Naive thymus-derived CD4-positive, alpha-beta T cell (primary cell): ENCODE measurements at regions of chr7 and their contacts with region 1.

Region 1: GRCh38 chr7:100726996-100727761 is 6.2 kb upstream of the ZAN start:
- DNase-seq: no peak
- ATAC-seq: no peak
- H3K4me3 ChIP-seq: no peak overlapping the region
- H3K4me3 Mint-ChIP-seq: no peak overlapping the region
- H3K27ac ChIP-seq: no peak overlapping the region
- H3K27ac Mint-ChIP-seq: peak overlapping the region in 1 of 9 donors; percentile 22
- H3K4me1 ChIP-seq: no peaks in the 10 kb centered on the region
- H3K4me1 Mint-ChIP-seq: peaks cover 0 to 5% (median 0%) of the 10 kb centered on the region in 7 donors
- H3K27me3 ChIP-seq: peaks cover 0 to 4% of the 10 kb centered on the region in 2 donors
- H3K27me3 Mint-ChIP-seq: peaks cover 16 to 31% (median 21%) of the 10 kb centered on the region in 5 donors

Region 2: GRCh38 chr7:100469227-100470044 is 257.7 kb before region 1 on chr7:
- CTCF ChIA-PET with region 1: interaction called, 3 read pairs
- POLR2A ChIA-PET with region 1: no interaction called
- intact Hi-C with region 1: loop called (anchors 1 kb)
- DNase-seq: peak; percentile 55 to 87 (median 75)
- ATAC-seq: peak; percentile 94
- H3K4me3 ChIP-seq: no peak overlapping the region
- H3K4me3 Mint-ChIP-seq: peak overlapping the region in 1 of 10 donors; percentile 41
- H3K27ac ChIP-seq: peak overlapping the region; percentile 3
- H3K27ac Mint-ChIP-seq: peak overlapping the region in 6 of 9 donors; percentile 22 to 85 (median 65)
- H3K4me1 ChIP-seq: peaks cover 16 to 23% of the 10 kb centered on the region in 2 donors
- H3K4me1 Mint-ChIP-seq: peaks cover 26 to 45% (median 29%) of the 10 kb centered on the region in 7 donors
- H3K27me3 ChIP-seq: no peaks in the 10 kb centered on the region
- H3K27me3 Mint-ChIP-seq: no peaks in the 10 kb centered on the region

Region 3: DNA sequence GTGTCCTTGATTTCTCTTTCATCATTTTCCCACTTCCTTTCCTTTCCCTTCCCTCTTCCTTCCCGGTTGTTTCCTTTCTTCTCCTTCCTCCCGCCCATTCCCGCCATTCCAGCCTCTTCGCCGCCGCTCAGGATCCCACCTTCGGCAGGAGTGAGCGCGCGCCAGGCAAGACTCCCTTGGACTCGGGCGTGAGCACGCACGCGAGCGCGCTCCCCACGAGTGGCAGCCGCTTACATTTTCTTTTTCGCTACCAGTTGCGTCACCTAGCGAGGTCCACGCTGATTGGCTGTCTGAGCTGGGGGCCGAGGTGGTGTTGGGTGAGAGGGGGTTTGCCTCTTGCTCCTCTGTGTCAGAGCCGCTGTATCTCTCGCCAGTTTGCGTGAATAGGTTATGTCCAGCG is 18.0 kb after region 1 on chr7:
- CTCF ChIA-PET with region 1: no interaction called
- POLR2A ChIA-PET with region 1: no interaction called
- intact Hi-C with region 1: loop called in 1 of 2 experiments (anchors 2 kb)
- DNase-seq: peak in 2 of 9 donors; percentile 18 to 25
- ATAC-seq: peak; percentile 64
- H3K4me3 ChIP-seq: no peak overlapping the region
- H3K4me3 Mint-ChIP-seq: peak overlapping the region in 6 of 10 donors; percentile 68 to 90 (median 84)
- H3K27ac ChIP-seq: no peak overlapping the region
- H3K27ac Mint-ChIP-seq: peak overlapping the region in 1 of 9 donors; percentile 53
- H3K4me1 ChIP-seq: no peaks in the 10 kb centered on the region
- H3K4me1 Mint-ChIP-seq: peaks cover 0 to 4% (median 0%) of the 10 kb centered on the region in 7 donors
- H3K27me3 ChIP-seq: no peaks in the 10 kb centered on the region
- H3K27me3 Mint-ChIP-seq: peaks cover 5 to 41% (median 18%) of the 10 kb centered on the region in 5 donors